Psoas muscle (tissue), 8 donors: ENCODE measurements at regions of chr6 and their contacts with region 1.

Region 1: GRCh38 chr6:83169511-83169910 is 23.6 kb downstream of the PGM3 start:
- DNase-seq: no peak
- ATAC-seq: no peak
- H3K4me3 ChIP-seq: no peak overlapping the region
- H3K27ac ChIP-seq: no peak overlapping the region
- H3K4me1 ChIP-seq: no peaks in the 10 kb centered on the region
- H3K27me3 ChIP-seq: no peaks in the 10 kb centered on the region
- CTCF ChIP-seq: no peak

Region 2: GRCh38 chr6:83119742-83120300 is 49.7 kb before region 1 on chr6:
- intact Hi-C with region 1: loop called (anchors 5 kb)
- DNase-seq: no peak
- ATAC-seq: no peak
- H3K4me3 ChIP-seq: no peak overlapping the region
- H3K27ac ChIP-seq: no peak overlapping the region
- H3K4me1 ChIP-seq: no peaks in the 10 kb centered on the region
- H3K27me3 ChIP-seq: no peaks in the 10 kb centered on the region
- CTCF ChIP-seq: no peak

Region 3: GRCh38 chr6:83127976-83128375 is 41.5 kb before region 1 on chr6:
- intact Hi-C with region 1: loop called in 1 of 2 experiments (anchors 5 kb)
- DNase-seq: no peak
- ATAC-seq: no peak
- H3K4me3 ChIP-seq: no peak overlapping the region
- H3K27ac ChIP-seq: no peak overlapping the region
- H3K4me1 ChIP-seq: no peaks in the 10 kb centered on the region
- H3K27me3 ChIP-seq: no peaks in the 10 kb centered on the region
- CTCF ChIP-seq: no peak